CD14-positive monocyte (primary cell): ENCODE measurements at regions of chr1 and their contacts with region 1.

Region 1: GRCh38 chr1:15994590-15995351 is 9.3 kb upstream of the SRARP start:
- DNase-seq: peak; percentile 46 to 65 (median 51)
- H3K4me3 ChIP-seq: no peak overlapping the region
- H3K4me3 Mint-ChIP-seq: no peak overlapping the region
- H3K27ac ChIP-seq: no peak overlapping the region
- H3K27ac Mint-ChIP-seq: no peak overlapping the region
- H3K4me1 ChIP-seq: no peaks in the 10 kb centered on the region
- H3K4me1 Mint-ChIP-seq: no peaks in the 10 kb centered on the region
- H3K27me3 ChIP-seq: no peaks in the 10 kb centered on the region
- H3K27me3 Mint-ChIP-seq: peaks cover 0 to 5% (median 0%) of the 10 kb centered on the region in 3 donors
- CTCF ChIP-seq: peak; percentile 86

Region 2: DNA sequence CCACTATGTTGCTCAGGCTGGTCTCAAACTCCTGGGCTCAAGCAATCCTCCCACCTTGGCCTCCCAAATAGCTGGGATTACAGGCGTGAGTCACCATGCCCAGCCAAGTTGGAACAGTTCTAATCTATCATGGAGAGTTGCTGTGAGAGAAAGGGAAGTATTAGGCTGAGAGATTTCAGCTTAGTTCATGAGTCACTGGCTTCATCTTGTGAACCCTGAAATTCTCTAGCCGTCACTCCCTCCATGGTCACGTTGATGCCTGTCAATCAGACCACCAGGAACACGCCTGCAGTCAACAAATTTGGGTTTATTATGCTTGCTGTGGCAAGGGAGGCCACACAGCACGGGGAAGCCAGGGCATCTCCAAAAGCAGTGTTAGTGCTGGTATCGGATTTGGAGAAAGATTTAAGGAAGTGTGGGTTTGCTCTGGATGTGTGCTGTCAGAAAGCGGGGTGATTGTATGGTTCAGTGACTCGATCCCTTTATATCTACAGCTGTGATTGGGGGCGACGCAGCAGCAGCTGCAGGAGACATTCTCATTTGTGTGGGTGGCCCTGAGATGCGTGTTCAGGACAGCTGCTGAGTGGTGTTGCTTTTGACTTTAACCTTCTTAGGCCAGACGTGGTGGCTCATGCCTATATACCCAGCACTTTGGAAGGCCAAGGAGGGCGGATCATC is 206.0 kb before region 1 on chr1:
- intact Hi-C with region 1: loop called in 1 of 2 experiments (anchors 1 kb)
- DNase-seq: peak; percentile 61 to 86 (median 67)
- H3K4me3 ChIP-seq: peak overlapping the region in 1 of 3 experiments; percentile 19
- H3K4me3 Mint-ChIP-seq: peak overlapping the region; percentile 22 to 84
- H3K27ac ChIP-seq: no peak overlapping the region
- H3K27ac Mint-ChIP-seq: peak overlapping the region in 6 of 7 donors; percentile 30 to 85 (median 58)
- H3K4me1 ChIP-seq: peaks cover 0 to 4% of the 10 kb centered on the region in 2 donors
- H3K4me1 Mint-ChIP-seq: peaks cover 6% of the 10 kb centered on the region
- H3K27me3 ChIP-seq: no peaks in the 10 kb centered on the region
- H3K27me3 Mint-ChIP-seq: peaks cover 1 to 14% (median 2%) of the 10 kb centered on the region in 3 donors
- CTCF ChIP-seq: no peak

Region 3: DNA sequence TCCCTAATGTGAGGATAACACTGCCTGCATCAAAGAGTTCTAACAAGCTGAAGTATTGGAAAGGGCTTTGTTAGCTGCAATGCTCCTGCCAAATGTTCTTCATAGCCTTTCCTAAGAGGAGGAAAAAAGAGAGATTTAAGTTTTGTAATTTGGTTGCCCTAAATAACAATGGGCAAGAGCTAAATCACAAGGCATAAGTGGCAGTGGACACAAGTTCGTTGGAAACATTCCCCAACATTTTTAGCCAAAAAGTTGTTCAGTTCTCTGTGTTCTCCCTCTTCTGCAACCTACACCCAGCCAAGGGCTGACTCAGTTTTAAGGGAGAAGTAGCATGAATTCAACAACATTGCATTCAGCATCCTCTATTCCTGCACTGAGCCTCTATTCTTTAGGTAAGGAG is 184.7 kb before region 1 on chr1:
- intact Hi-C with region 1: no loop called
- DNase-seq: no peak
- H3K4me3 ChIP-seq: no peak overlapping the region
- H3K4me3 Mint-ChIP-seq: no peak overlapping the region
- H3K27ac ChIP-seq: no peak overlapping the region
- H3K27ac Mint-ChIP-seq: no peak overlapping the region
- H3K4me1 ChIP-seq: no peaks in the 10 kb centered on the region
- H3K4me1 Mint-ChIP-seq: no peaks in the 10 kb centered on the region
- H3K27me3 ChIP-seq: no peaks in the 10 kb centered on the region
- H3K27me3 Mint-ChIP-seq: peaks cover 4 to 12% (median 8%) of the 10 kb centered on the region in 3 donors
- CTCF ChIP-seq: no peak

Region 4: GRCh38 chr1:15937706-15938168 is 57.0 kb before region 1 on chr1:
- intact Hi-C with region 1: loop called (anchors 5 kb)
- DNase-seq: peak; percentile 36 to 63 (median 45)
- H3K4me3 ChIP-seq: no peak overlapping the region
- H3K4me3 Mint-ChIP-seq: no peak overlapping the region
- H3K27ac ChIP-seq: peak overlapping the region; percentile 9 to 68
- H3K27ac Mint-ChIP-seq: peak overlapping the region; percentile 69 to 94 (median 87)
- H3K4me1 ChIP-seq: no peaks in the 10 kb centered on the region
- H3K4me1 Mint-ChIP-seq: peaks cover 4% of the 10 kb centered on the region
- H3K27me3 ChIP-seq: no peaks in the 10 kb centered on the region
- H3K27me3 Mint-ChIP-seq: peaks cover 0 to 4% (median 1%) of the 10 kb centered on the region in 3 donors
- CTCF ChIP-seq: peak; percentile 22

Region 5: GRCh38 chr1:16032388-16033103 is 37.8 kb after region 1 on chr1:
- intact Hi-C with region 1: no loop called
- DNase-seq: peak; percentile 60 to 77 (median 70)
- H3K4me3 ChIP-seq: no peak overlapping the region
- H3K4me3 Mint-ChIP-seq: no peak overlapping the region
- H3K27ac ChIP-seq: no peak overlapping the region
- H3K27ac Mint-ChIP-seq: peak overlapping the region in 1 of 7 donors; percentile 40
- H3K4me1 ChIP-seq: no peaks in the 10 kb centered on the region
- H3K4me1 Mint-ChIP-seq: peaks cover 4% of the 10 kb centered on the region
- H3K27me3 ChIP-seq: peaks cover 0 to 5% of the 10 kb centered on the region in 2 donors
- H3K27me3 Mint-ChIP-seq: peaks cover 4 to 21% (median 8%) of the 10 kb centered on the region in 3 donors
- CTCF ChIP-seq: peak; percentile 91

Region 6: DNA sequence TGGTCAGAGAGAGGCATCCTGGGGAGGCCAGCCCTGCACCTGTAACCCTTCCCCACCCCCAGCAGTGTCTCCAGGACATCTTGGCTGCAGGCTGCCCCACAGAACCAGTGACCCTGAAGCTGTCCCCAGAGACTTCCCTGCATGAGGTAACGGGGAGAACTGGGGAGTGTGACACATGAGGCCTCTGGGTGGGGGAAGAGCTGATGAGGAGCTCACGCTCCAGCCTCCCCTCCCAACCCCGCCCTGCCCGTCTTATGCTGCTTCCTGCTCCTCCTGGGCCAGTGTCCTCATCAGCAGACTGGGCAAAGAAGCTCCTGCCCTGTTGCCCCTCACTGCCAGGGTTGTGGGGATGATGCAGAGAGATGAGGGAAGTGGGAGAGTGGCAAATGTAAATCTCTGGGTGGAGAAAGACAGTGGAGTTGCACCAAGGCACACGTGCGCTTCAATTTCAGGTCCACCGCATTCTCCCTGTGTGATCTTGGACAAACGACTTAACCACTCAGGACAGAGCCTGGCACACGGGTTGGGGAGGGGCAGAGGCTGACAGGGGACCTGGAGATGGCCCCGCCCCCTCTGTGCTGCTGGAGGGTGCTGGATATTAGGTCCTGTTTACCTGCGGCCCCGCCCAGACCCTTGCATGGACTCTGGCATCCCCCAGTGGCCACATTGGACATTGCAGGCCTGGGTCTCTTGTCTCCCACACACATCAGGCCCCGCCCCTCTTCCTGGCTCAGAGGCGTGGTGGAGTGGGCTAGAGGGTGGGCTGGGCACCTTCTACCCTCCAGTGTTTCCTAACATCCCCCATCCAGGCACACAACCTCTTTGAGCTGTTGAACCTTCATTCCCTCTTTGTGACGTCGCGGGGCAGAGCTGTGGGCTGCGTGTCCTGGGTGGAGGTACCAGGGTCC is 61.1 kb after region 1 on chr1:
- intact Hi-C with region 1: no loop called
- DNase-seq: peak; percentile 56 to 69 (median 61)
- H3K4me3 ChIP-seq: no peak overlapping the region
- H3K4me3 Mint-ChIP-seq: no peak overlapping the region
- H3K27ac ChIP-seq: no peak overlapping the region
- H3K27ac Mint-ChIP-seq: no peak overlapping the region
- H3K4me1 ChIP-seq: peaks cover 0 to 3% of the 10 kb centered on the region in 2 donors
- H3K4me1 Mint-ChIP-seq: peaks cover 4% of the 10 kb centered on the region
- H3K27me3 ChIP-seq: no peaks in the 10 kb centered on the region
- H3K27me3 Mint-ChIP-seq: peaks cover 2 to 10% (median 5%) of the 10 kb centered on the region in 3 donors
- CTCF ChIP-seq: peak; percentile 98